ENCODE measurements at regions of chr10 and their contacts with region 1.

Region 1: GRCh38 chr10:5813287-5814109 is at the start of gene GDI2:
- DNase-seq: peak; percentile 97 to 98
- ATAC-seq: peak; percentile 99
- H3K4me3 ChIP-seq: peak within 1 kb of the TSS; percentile 77 to 83
- H3K27ac ChIP-seq: peak within 1 kb of the TSS; percentile 46 to 72
- H3K4me1 ChIP-seq: peaks cover 0 to 2% of the 10 kb centered on the region in 2 donors
- H3K27me3 ChIP-seq: no peaks in the 10 kb centered on the region
- total RNA-seq, gene GDI2: 140 to 161 TPM

Region 2: GRCh38 chr10:5449823-5450222 is 363.7 kb before region 1 on chr10:
- intact Hi-C with region 1: no loop called
- DNase-seq: no peak
- ATAC-seq: peak; percentile 16
- H3K4me3 ChIP-seq: peak overlapping the region; percentile 93 to 100
- H3K27ac ChIP-seq: peak overlapping the region in 1 of 2 donors; percentile 59
- H3K4me1 ChIP-seq: peaks cover 0 to 2% of the 10 kb centered on the region in 2 donors
- H3K27me3 ChIP-seq: no peaks in the 10 kb centered on the region

Region 3: GRCh38 chr10:5629303-5630111 is 184.0 kb before region 1 on chr10:
- intact Hi-C with region 1: loop called in 1 of 2 experiments (anchors 5 kb)
- DNase-seq: peak; percentile 87 to 89
- ATAC-seq: peak; percentile 76
- H3K4me3 ChIP-seq: no peak overlapping the region
- H3K27ac ChIP-seq: peak overlapping the region; percentile 29 to 50
- H3K4me1 ChIP-seq: peaks cover 0 to 2% of the 10 kb centered on the region in 2 donors
- H3K27me3 ChIP-seq: no peaks in the 10 kb centered on the region

Region 4: GRCh38 chr10:5684318-5684970 is 129.1 kb before region 1 on chr10 and contains the start of gene TASOR2:
- intact Hi-C with region 1: loop called in 1 of 2 experiments (anchors 10 kb)
- DNase-seq: peak; percentile 99
- ATAC-seq: peak; percentile 97
- H3K4me3 ChIP-seq: peak within 1 kb of the TSS; percentile 81 to 90
- H3K27ac ChIP-seq: peak within 1 kb of the TSS in 1 of 2 donors; percentile 73
- H3K4me1 ChIP-seq: no peaks in the 10 kb centered on the region
- H3K27me3 ChIP-seq: no peaks in the 10 kb centered on the region
- total RNA-seq, gene TASOR2: 68.2 to 72.6 TPM

Region 5: GRCh38 chr10:5873515-5873995 is 60.1 kb after region 1 on chr10:
- intact Hi-C with region 1: loop called in 1 of 2 experiments (anchors 5 kb)
- DNase-seq: peak in 1 of 2 donors; percentile 70
- ATAC-seq: peak; percentile 88
- H3K4me3 ChIP-seq: no peak overlapping the region
- H3K27ac ChIP-seq: no peak overlapping the region
- H3K4me1 ChIP-seq: no peaks in the 10 kb centered on the region
- H3K27me3 ChIP-seq: no peaks in the 10 kb centered on the region